Breast epithelium (tissue), 4 donors: ENCODE measurements at regions of chr2 and their contacts with region 1.

Region 1: GRCh38 chr2:26487192-26487591 is 9.3 kb upstream of the OTOF start:
- DNase-seq: no peak
- H3K4me3 ChIP-seq: no peak overlapping the region
- H3K27ac ChIP-seq: no peak overlapping the region
- H3K4me1 ChIP-seq: no peaks in the 10 kb centered on the region
- H3K27me3 ChIP-seq: no peaks in the 10 kb centered on the region
- CTCF ChIP-seq: no peak
- POLR2A ChIP-seq: no peak

Region 2: DNA sequence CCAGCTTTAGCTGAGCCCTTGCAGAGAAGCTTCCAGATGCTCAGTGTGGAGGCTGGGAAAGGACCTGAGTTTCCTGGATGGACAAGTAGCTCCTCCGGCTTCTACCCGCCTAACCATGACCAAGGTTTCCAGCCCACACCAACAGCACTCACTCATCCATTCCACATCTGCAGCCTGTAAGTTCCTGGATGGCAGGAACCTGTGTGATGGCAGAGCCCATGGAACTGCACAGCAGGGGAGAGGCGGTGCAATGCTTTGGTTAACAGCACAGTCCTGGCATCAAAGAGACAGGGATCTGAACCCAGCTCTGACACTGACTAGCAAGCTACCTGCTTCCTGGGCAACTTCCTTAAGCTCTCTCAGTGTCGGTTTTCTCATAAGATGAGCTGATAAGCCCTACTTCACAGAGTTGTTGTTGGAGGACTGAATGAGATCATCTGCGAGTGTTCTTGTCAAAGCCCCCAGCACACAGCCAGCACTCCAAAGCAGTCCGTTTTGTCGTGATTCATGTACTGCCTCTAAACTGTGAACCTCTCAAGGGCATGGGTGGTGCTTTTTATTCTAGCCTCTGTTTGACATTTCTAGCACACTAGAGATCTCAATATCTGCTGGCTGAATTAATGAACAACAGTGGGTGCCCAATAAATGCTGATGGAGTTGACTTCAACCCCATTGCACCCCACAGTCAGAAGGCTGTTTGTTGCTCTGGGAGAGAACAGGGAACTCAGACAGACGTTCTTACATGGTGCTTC is 32.4 kb after region 1 on chr2:
- intact Hi-C with region 1: loop called (anchors 1 kb)
- DNase-seq: no peak
- H3K4me3 ChIP-seq: no peak overlapping the region
- H3K27ac ChIP-seq: no peak overlapping the region
- H3K4me1 ChIP-seq: no peaks in the 10 kb centered on the region
- H3K27me3 ChIP-seq: peaks cover 0 to 15% of the 10 kb centered on the region in 2 donors
- CTCF ChIP-seq: no peak
- POLR2A ChIP-seq: no peak

Region 3: GRCh38 chr2:26550276-26550950 is 63.2 kb after region 1 on chr2:
- intact Hi-C with region 1: no loop called
- DNase-seq: no peak
- H3K4me3 ChIP-seq: no peak overlapping the region
- H3K27ac ChIP-seq: no peak overlapping the region
- H3K4me1 ChIP-seq: no peaks in the 10 kb centered on the region
- H3K27me3 ChIP-seq: no peaks in the 10 kb centered on the region
- CTCF ChIP-seq: no peak
- POLR2A ChIP-seq: no peak

Region 4: DNA sequence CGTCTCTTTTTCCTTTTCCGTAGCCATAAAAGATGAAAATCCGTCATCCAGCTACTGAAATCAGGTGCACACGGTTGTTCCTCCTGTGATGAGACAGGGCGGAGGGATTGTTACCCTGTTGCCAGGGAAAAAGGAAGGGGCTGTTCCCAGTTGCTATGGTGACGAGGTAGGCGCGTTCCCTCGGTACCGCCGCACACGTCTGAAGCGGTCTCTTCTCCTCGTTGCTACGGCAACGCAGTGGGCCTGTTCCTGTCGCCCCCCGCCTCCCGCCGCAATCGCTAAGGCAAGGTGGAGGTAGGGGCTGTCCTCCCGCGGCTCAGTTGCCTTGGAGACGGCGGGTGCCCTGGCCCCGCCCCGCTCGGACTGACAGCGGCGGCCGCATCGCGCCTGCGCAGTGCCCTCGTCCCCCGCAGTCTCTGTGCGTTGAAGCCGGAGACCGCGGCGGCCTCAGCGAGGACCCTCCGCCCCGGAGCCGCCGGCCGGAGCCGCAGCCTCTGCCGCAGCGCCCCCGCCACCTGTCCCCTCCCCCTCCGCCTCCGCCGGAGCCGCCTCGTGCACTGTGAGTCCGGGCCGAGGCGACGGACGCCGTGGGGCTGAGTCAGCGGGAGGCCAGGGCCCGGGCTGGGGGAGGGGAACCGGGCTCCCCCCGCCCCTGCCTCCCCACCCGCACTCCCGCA is 483.2 kb after region 1 on chr2 and contains the start of gene MAPRE3:
- intact Hi-C with region 1: no loop called
- DNase-seq: peak; percentile 69 to 72
- H3K4me3 ChIP-seq: peak within 1 kb of the TSS; percentile 64 to 92 (median 90)
- H3K27ac ChIP-seq: peak within 1 kb of the TSS; percentile 92 to 93
- H3K4me1 ChIP-seq: peaks cover 0 to 4% of the 10 kb centered on the region in 2 donors
- H3K27me3 ChIP-seq: no peaks in the 10 kb centered on the region
- CTCF ChIP-seq: no peak
- POLR2A ChIP-seq: no peak
- total RNA-seq, gene MAPRE3: 10.6 to 21.3 (median 19.9) TPM

Region 5: GRCh38 chr2:27003857-27004256 is 516.7 kb after region 1 on chr2:
- intact Hi-C with region 1: no loop called
- DNase-seq: no peak
- H3K4me3 ChIP-seq: no peak overlapping the region
- H3K27ac ChIP-seq: no peak overlapping the region
- H3K4me1 ChIP-seq: no peaks in the 10 kb centered on the region
- H3K27me3 ChIP-seq: no peaks in the 10 kb centered on the region
- CTCF ChIP-seq: no peak
- POLR2A ChIP-seq: no peak

Region 6: GRCh38 chr2:27727257-27727656 is 1240.1 kb after region 1 on chr2:
- intact Hi-C with region 1: no loop called
- DNase-seq: no peak
- H3K4me3 ChIP-seq: no peak overlapping the region
- H3K27ac ChIP-seq: no peak overlapping the region
- H3K4me1 ChIP-seq: no peaks in the 10 kb centered on the region
- H3K27me3 ChIP-seq: no peaks in the 10 kb centered on the region
- CTCF ChIP-seq: no peak
- POLR2A ChIP-seq: no peak